Calu3 (cell line): ENCODE measurements at regions of chr13 and their contacts with region 1.

Region 1: DNA sequence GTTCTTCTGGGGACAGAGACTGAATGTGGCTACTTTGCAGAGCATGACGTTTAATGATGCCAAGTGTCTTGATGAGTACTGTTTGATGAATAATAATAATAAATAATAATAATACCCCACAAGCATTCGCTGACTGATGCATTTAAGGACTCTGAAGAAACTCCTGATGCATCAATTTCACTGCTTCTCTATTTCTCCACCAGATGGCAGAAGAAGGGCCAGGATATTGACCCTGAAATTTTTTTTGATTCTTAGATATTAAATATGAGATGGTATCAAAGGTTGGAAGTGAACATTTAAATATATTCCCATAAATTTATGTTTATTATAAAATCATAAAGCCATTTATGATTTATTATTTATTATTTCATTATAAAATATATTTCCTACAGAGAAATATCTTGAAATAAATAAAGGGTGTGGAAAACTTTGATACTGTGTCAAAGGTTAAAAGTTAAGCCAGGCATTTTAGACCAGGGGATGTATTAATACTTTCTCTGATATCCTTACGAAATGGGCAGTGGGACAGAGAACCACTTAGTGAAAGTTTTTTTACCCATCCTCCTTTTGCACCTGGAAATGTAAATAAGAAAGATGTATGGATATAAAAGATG is 170.9 kb downstream of the LACC1 start:
- DNase-seq: peak; percentile 4
- H3K4me3 Mint-ChIP-seq: no peak overlapping the region
- H3K27ac Mint-ChIP-seq: no peak overlapping the region
- H3K4me1 Mint-ChIP-seq: peaks cover 6% of the 10 kb centered on the region
- H3K27me3 Mint-ChIP-seq: peaks cover 21% of the 10 kb centered on the region
- CTCF ChIP-seq: no peak

Region 2: GRCh38 chr13:43905435-43906031 is 145.0 kb before region 1 on chr13:
- CTCF ChIA-PET with region 1: interaction called, 7 read pairs
- intact Hi-C with region 1: loop called (anchors 2 kb)
- DNase-seq: peak; percentile 23
- H3K4me3 Mint-ChIP-seq: no peak overlapping the region
- H3K27ac Mint-ChIP-seq: no peak overlapping the region
- H3K4me1 Mint-ChIP-seq: peaks cover 18% of the 10 kb centered on the region
- H3K27me3 Mint-ChIP-seq: no peaks in the 10 kb centered on the region
- CTCF ChIP-seq: peak; percentile 44

Region 3: DNA sequence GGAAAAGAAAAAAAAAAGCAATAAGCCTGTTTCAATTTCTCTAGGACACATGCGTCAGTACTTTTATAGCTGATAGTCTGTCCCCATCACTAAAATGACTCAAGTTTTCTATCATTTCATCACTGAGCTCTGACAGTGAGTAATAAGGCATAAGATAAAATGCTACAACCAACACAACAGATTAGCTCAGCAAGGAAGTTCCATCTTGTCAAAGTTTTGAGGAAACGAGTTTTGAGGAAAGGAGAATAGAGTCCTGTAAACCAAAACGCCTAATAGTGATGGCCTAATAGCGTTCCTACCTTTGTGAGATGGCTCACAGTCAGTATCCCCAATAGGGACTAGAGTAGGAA is 25.7 kb before region 1 on chr13:
- CTCF ChIA-PET with region 1: interaction called, 15 read pairs
- intact Hi-C with region 1: no loop called
- DNase-seq: no peak
- H3K4me3 Mint-ChIP-seq: no peak overlapping the region
- H3K27ac Mint-ChIP-seq: no peak overlapping the region
- H3K4me1 Mint-ChIP-seq: no peaks in the 10 kb centered on the region
- H3K27me3 Mint-ChIP-seq: no peaks in the 10 kb centered on the region
- CTCF ChIP-seq: no peak

Region 4: GRCh38 chr13:44470638-44471562 is 420.3 kb after region 1 on chr13:
- CTCF ChIA-PET with region 1: no interaction called
- intact Hi-C with region 1: loop called (anchors 1 kb)
- DNase-seq: no peak
- H3K4me3 Mint-ChIP-seq: no peak overlapping the region
- H3K27ac Mint-ChIP-seq: no peak overlapping the region
- H3K4me1 Mint-ChIP-seq: peaks cover 10% of the 10 kb centered on the region
- H3K27me3 Mint-ChIP-seq: no peaks in the 10 kb centered on the region
- CTCF ChIP-seq: no peak